ENCODE measurements at regions of chr7 and their contacts with region 1.

Region 1: DNA sequence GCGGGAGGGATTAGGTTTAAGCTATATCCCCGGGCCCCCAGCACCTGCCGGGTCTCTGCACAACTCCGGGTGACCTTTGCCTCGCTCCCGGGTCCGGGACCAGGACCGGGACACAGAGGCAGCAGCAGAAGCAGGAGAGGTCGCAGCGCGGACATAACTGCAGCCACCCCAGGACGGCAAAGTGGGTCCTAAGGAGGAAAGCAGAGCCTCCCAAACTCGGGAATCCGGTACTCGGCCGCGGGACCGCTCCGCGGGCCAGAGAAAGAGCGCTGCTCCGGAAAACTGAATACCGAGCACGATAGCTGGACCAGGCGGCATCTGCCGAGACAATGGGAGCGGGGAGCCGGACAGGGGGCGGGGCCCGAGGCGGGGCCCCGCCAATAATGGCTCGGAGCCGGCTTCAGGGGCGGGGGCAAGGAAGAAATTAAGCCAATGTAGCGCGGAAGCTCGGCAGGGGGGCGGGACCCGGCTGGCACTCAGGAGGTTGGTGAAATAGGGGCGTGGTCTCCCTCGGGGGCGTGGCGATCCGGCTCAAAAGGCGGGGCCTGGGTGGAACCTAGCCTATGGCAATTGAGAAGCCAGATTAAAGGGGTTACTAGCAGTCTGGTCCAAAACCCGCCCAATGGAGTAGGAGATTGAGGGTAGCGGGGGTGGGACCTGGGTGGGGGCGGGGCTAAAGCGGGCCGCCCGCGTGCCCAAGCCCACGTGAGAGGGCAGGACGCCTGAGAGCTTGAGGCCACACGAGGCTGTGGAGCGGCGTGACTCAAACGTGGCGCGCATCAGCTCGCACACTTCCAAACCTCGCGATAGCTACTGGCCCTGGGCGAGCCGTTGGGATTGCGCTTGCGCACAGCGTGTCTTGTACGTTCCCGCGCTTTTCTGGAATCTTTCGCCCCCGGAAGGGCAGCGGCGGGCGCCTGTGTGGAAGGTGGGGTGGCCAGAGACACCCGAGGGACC is at the starts of genes GPC2 and STAG3:
- DNase-seq: peak; percentile 95 to 99 (median 98)
- ATAC-seq: peak; percentile 97
- H3K4me3 ChIP-seq: peak within 1 kb of the TSS; percentile 70
- H3K4me3 Mint-ChIP-seq: peak within 1 kb of the TSS; percentile 76 to 84 (median 80)
- H3K27ac ChIP-seq: peak within 1 kb of the TSS; percentile 76
- H3K27ac Mint-ChIP-seq: peak within 1 kb of the TSS; percentile 42 to 92 (median 78)
- H3K4me1 ChIP-seq: peaks cover 7 to 28% of the 10 kb centered on the region in 2 donors
- H3K4me1 Mint-ChIP-seq: peaks cover 28 to 67% (median 52%) of the 10 kb centered on the region in 7 donors
- H3K27me3 ChIP-seq: no peaks in the 10 kb centered on the region
- H3K27me3 Mint-ChIP-seq: peaks cover 0 to 4% (median 0%) of the 10 kb centered on the region in 5 donors
- total RNA-seq, gene GPC2: 8.1 to 30.6 (median 18.2) TPM
- total RNA-seq, gene STAG3: 5.5 to 24.6 (median 9.5) TPM

Region 2: DNA sequence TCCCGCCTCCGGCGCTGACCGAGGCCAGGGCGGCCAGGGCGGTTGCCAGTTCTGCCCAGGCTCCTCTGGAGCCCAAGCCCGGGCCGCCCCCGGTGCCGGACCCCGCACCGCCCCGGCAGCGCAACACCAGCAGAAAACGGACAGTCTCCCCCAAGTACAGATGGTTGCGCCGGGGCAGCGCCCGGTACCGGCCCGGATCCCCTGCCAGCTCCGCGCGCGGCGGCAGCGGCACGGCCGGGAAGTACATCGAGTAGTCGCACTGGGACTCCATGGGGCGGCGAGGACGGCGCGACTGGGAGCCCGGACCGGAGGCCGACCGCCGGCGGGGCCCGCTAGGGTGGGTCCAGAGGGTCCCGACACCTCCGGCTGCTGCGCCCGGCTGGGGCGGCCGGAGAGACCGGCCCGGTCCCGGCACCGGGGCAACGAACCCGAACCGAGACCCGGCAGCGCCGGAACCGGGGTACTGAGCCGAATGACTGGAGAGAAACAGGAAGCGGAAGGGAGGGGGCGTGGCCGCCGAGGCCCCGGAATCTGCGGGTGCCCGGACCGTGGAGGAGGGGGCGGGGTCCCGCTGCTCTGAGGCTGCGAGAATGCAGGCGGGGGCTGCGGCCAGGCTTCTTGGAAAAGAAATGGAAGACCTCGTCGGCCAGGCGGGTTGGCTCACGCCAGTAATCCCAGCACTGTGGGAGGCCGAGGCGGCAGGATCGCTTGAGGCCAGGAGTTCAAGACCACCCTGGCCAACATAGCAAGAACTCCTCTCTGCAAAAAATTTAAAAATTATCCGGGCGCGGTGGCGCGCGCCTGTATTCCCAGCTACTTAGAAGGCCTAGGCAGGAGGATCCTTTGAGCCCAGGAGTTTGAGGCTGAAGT is 18.9 kb before region 1 on chr7 and contains the start of gene TRAPPC14:
- CTCF ChIA-PET with region 1: interaction called, 4 read pairs
- POLR2A ChIA-PET with region 1: interaction called, 383 read pairs
- intact Hi-C with region 1: loop called (anchors 1 kb)
- DNase-seq: peak; percentile 79 to 95 (median 88)
- ATAC-seq: peak; percentile 93
- H3K4me3 ChIP-seq: peak within 1 kb of the TSS; percentile 79
- H3K4me3 Mint-ChIP-seq: peak within 1 kb of the TSS; percentile 83 to 93 (median 88)
- H3K27ac ChIP-seq: peak within 1 kb of the TSS; percentile 88
- H3K27ac Mint-ChIP-seq: peak within 1 kb of the TSS; percentile 77 to 98 (median 89)
- H3K4me1 ChIP-seq: peaks cover 13 to 35% of the 10 kb centered on the region in 2 donors
- H3K4me1 Mint-ChIP-seq: peaks cover 39 to 81% (median 66%) of the 10 kb centered on the region in 7 donors
- H3K27me3 ChIP-seq: no peaks in the 10 kb centered on the region
- H3K27me3 Mint-ChIP-seq: no peaks in the 10 kb centered on the region
- total RNA-seq, gene TRAPPC14: 51.8 to 102 (median 70.2) TPM

Region 3: DNA sequence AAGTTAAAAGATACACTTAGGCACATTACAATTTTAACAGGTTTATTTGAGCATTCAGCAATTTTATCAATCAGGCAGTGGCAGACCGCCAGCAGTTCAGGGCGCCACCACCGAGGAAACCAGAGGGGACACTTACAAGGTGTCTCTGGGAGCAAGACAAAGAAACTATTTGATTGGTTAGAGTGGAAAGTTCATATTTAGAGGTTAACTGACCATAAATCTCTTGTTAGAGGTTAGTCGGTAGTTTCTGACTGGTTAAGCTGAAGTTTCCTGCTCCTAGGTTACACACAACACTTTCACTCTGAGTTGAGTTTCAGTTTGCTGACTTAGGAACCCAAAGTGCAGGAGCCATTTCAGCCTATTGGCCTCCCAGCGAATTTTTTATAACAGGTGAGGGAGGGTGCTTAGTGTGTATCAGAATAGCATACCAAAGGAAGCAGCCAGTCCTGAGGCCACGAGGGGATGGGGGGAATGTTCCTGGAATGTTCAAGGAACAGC is 31.6 kb after region 1 on chr7:
- CTCF ChIA-PET with region 1: interaction called, 3 read pairs
- POLR2A ChIA-PET with region 1: interaction called, 8 read pairs
- intact Hi-C with region 1: loop called (anchors 5 kb)
- DNase-seq: peak in 6 of 9 donors; percentile 29 to 38 (median 34)
- ATAC-seq: peak; percentile 54
- H3K4me3 ChIP-seq: peak overlapping the region; percentile 45
- H3K4me3 Mint-ChIP-seq: peak overlapping the region; percentile 46 to 77 (median 74)
- H3K27ac ChIP-seq: peak overlapping the region; percentile 49
- H3K27ac Mint-ChIP-seq: peak overlapping the region; percentile 66 to 98 (median 87)
- H3K4me1 ChIP-seq: peaks cover 44 to 45% of the 10 kb centered on the region in 2 donors
- H3K4me1 Mint-ChIP-seq: peaks cover 39 to 56% (median 54%) of the 10 kb centered on the region in 7 donors
- H3K27me3 ChIP-seq: no peaks in the 10 kb centered on the region
- H3K27me3 Mint-ChIP-seq: no peaks in the 10 kb centered on the region

Region 4: GRCh38 chr7:100342765-100343164 is 165.4 kb after region 1 on chr7:
- CTCF ChIA-PET with region 1: no interaction called
- POLR2A ChIA-PET with region 1: no interaction called
- intact Hi-C with region 1: loop called in 1 of 2 experiments (anchors 1 kb)
- DNase-seq: no peak
- ATAC-seq: no peak
- H3K4me3 ChIP-seq: no peak overlapping the region
- H3K4me3 Mint-ChIP-seq: no peak overlapping the region
- H3K27ac ChIP-seq: peak overlapping the region; percentile 38
- H3K27ac Mint-ChIP-seq: peak overlapping the region; percentile 49 to 90 (median 73)
- H3K4me1 ChIP-seq: peaks cover 4 to 9% of the 10 kb centered on the region in 2 donors
- H3K4me1 Mint-ChIP-seq: peaks cover 6 to 46% (median 34%) of the 10 kb centered on the region in 7 donors
- H3K27me3 ChIP-seq: no peaks in the 10 kb centered on the region
- H3K27me3 Mint-ChIP-seq: no peaks in the 10 kb centered on the region